ENCODE measurements at regions of chr16 and their contacts with region 1.

Region 1: DNA sequence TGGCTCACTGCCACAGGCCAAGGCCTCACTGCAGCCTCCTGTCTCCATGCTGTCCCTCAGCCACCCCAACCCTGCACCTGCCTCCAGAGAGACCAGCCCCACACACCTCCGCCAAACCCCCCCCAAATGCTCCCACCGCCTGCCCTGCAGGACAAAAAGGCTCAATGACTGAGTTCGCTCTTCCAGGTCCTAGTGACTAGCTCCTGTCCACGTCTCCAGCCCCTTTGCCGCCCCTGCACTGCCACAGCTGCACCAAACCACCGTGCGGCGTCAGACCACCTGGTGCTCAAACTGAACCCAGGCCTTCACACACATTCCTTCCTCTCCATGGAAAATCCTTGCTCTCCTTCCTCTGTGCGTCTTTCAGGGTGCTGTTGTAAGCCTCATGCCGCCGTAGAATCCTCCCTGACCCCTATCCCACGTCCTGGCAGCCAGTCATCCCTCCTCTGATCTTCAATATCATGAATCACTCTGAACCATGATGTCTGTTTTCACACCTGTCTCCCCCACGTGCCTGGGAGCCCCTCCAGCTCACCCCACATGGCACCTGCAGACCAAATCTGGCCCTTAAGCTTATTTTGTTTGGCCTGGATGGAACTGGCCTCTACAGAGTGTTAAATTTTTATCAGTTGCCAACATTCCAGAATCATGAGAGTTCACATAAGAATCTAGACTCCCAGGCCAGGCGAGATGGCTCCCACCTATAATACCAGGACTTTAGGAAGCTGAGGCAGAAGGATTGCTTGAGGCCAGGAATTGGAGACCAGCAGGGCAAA is 4.3 kb upstream of the GSG1L start:
- DNase-seq: peak in 1 of 4 experiments; percentile 4
- ATAC-seq: no peak
- H3K4me3 ChIP-seq: no peak overlapping the region
- H3K27ac ChIP-seq: no peak overlapping the region
- H3K4me1 ChIP-seq: no peaks in the 10 kb centered on the region
- H3K27me3 ChIP-seq: peaks cover 29 to 56% of the 10 kb centered on the region in 2 experiments
- CTCF ChIP-seq: no peak
- EP300 ChIP-seq: no peak
- POLR2A ChIP-seq: no peak
- RAD21 ChIP-seq: no peak

Region 2: DNA sequence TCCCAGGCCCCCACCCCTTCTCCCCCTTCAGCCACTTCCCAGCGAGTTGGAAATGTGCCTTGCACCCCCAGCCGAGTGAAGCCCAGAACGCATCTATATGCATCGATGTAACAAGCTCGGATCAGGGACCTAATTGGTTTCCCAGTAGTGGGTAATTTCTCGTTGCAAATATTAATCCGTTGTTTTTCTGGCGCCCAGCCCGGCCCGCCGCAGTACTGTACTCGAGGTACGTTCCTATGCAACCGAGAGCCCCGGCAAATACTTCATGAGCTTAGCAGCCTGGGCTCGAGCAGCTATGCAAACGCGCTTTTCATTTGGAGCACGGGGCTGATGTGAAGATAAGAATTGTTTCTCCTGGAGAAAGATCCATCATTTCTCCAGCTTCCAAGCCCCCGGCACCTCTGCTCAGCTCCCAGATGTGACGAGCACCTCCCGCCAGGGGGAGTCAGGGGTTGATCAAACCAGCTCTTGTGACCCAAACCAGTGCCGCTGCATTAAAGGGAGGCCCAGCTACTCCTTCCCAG is 288.1 kb before region 1 on chr16:
- CTCF ChIA-PET with region 1: no interaction called
- POLR2A ChIA-PET with region 1: no interaction called
- in situ Hi-C with region 1: no loop called
- intact Hi-C with region 1: loop called (anchors 1 kb)
- DNase-seq: peak; percentile 64 to 78 (median 75)
- ATAC-seq: peak; percentile 87
- H3K4me3 ChIP-seq: no peak overlapping the region
- H3K27ac ChIP-seq: no peak overlapping the region
- H3K4me1 ChIP-seq: peaks cover 0 to 16% of the 10 kb centered on the region in 2 experiments; a peak in 2 of 5 replicates
- H3K27me3 ChIP-seq: peaks cover 9 to 58% of the 10 kb centered on the region in 2 experiments; a peak in 4 of 5 replicates
- CTCF ChIP-seq: peak; percentile 68 to 72 (median 71)
- EP300 ChIP-seq: no peak
- POLR2A ChIP-seq: no peak
- RAD21 ChIP-seq: peak in 1 of 2 experiments; percentile 62; a peak in 2 of 4 replicates

Region 3: GRCh38 chr16:27972500-27972899 is 95.3 kb before region 1 on chr16:
- CTCF ChIA-PET with region 1: interaction called, 8 read pairs
- POLR2A ChIA-PET with region 1: no interaction called
- in situ Hi-C with region 1: loop called (anchors 5 kb)
- intact Hi-C with region 1: loop called (anchors 1 kb)
- DNase-seq: peak; percentile 40 to 48 (median 44)
- ATAC-seq: peak; percentile 74
- H3K4me3 ChIP-seq: no peak overlapping the region
- H3K27ac ChIP-seq: no peak overlapping the region
- H3K4me1 ChIP-seq: no peaks in the 10 kb centered on the region
- H3K27me3 ChIP-seq: peaks cover 0 to 7% of the 10 kb centered on the region in 2 experiments; a peak in 2 of 5 replicates
- CTCF ChIP-seq: peak; percentile 57 to 64 (median 61)
- EP300 ChIP-seq: no peak
- POLR2A ChIP-seq: no peak
- RAD21 ChIP-seq: peak; percentile 51 to 77

Region 4: DNA sequence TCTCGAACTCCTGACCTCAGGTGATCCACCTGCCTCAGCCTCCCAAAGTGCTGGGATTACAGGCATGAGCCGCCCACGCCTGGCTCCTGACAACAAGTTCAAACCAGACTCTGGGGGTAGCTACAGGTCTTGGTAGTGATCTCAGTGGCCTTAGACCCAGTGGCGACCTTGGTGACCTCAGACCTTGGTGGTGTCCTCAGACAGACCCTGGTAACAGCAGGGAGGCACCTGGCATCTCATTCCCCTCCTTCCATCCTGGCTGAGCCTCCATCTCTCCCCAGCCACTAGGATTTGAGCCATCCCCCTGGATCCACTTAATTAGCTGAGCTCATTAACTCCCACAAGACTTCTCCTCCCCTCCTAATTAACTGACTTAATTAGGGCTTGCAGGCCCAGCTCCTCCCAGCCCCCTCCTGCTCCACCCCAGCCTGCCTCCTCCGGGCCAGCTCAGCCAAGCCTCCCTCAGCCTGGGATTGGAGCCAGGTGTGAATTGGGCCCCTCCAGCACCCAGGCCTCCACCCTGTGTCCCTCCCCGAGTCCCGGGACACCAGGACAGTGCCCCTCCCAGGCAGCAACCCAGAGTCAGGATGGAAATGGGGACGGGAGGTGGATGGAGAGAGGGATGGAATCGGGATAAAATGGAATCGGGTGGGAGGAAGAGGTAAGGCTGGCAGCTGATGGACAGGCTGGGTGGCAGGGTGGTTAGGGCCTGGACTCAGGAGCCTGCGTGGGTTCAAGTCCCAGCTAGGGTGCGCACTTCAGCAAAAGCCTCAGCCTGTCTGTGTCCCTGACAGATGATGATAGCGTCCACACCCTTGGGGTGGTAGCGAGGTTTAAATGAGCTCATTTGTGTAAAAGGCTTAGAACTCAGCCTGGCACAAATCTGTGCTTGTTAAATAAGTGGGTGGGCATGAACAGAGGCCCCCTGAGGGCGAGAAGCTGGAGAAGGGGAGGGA is 213.4 kb after region 1 on chr16:
- CTCF ChIA-PET with region 1: no interaction called
- POLR2A ChIA-PET with region 1: no interaction called
- in situ Hi-C with region 1: no loop called
- intact Hi-C with region 1: no loop called
- DNase-seq: peak in 1 of 4 experiments; percentile 34
- ATAC-seq: peak; percentile 48; the same call in 2 of the 3 replicates
- H3K4me3 ChIP-seq: no peak overlapping the region
- H3K27ac ChIP-seq: no peak overlapping the region
- H3K4me1 ChIP-seq: peaks cover 4 to 13% of the 10 kb centered on the region in 2 experiments; a peak in 2 of 5 replicates
- H3K27me3 ChIP-seq: peaks cover 18 to 51% of the 10 kb centered on the region in 2 experiments; a peak in 4 of 5 replicates
- CTCF ChIP-seq: peak; percentile 20 to 37 (median 30); a peak in 4 of 6 replicates
- EP300 ChIP-seq: no peak
- POLR2A ChIP-seq: no peak
- RAD21 ChIP-seq: peak in 1 of 2 experiments; percentile 18; a peak in 1 of 4 replicates

Region 5: GRCh38 chr16:28291873-28292660 is 224.3 kb after region 1 on chr16 and contains the start of gene SBK1:
- CTCF ChIA-PET with region 1: no interaction called
- POLR2A ChIA-PET with region 1: no interaction called
- in situ Hi-C with region 1: no loop called
- intact Hi-C with region 1: no loop called
- DNase-seq: peak; percentile 84 to 99 (median 96)
- ATAC-seq: peak; percentile 98
- H3K4me3 ChIP-seq: peak within 1 kb of the TSS; percentile 33
- H3K27ac ChIP-seq: no peak within 1 kb of the TSS
- H3K4me1 ChIP-seq: peaks cover 4 to 14% of the 10 kb centered on the region in 2 experiments; a peak in 3 of 5 replicates
- H3K27me3 ChIP-seq: peaks cover 13 to 48% of the 10 kb centered on the region in 2 experiments; a peak in 4 of 5 replicates
- CTCF ChIP-seq: no peak
- EP300 ChIP-seq: no peak
- POLR2A ChIP-seq: no peak
- RAD21 ChIP-seq: no peak
- polyA plus RNA-seq, gene SBK1: not detected

Measured in K562 (cell line).